KBM-7 (cell line): ENCODE measurements at regions of chrX and their contacts with region 1.

Region 1: GRCh38 chrX:149504915-149505651 is at the start of gene IDS:
- DNase-seq: peak; percentile 94

Region 2: GRCh38 chrX:149631234-149632165 is 126.4 kb after region 1 on chrX and contains the start of gene TMEM185A:
- in situ Hi-C with region 1: loop called (anchors 25 kb)
- DNase-seq: peak; percentile 82